ENCODE measurements at regions of chr5 and their contacts with region 1.

Region 1: DNA sequence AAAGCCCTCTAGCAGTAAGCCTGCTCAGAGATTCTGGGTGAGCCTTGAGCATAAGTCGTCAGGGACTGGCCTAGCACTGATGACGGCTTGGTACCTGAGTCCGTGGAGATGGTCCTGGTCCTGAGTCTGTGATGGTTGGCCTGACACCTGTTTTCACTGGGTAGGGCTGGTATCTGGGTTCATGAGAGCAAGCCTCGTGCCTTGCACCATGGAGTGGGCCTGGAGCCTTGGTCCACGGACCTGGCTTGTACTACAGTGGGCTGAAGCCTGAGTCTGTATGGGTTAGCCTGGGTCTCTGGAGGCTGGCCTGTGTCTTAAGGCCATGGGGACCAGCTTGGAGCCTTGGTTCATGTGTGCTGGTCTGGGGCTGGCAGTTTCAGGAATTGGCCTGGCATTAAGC is 310.3 kb upstream of the ISL1 start:
- DNase-seq: no peak

Region 2: GRCh38 chr5:50759526-50760270 is 313.2 kb before region 1 on chr5:
- intact Hi-C with region 1: no loop called
- DNase-seq: no peak

Region 3: GRCh38 chr5:51104556-51104955 is 31.6 kb after region 1 on chr5:
- intact Hi-C with region 1: no loop called
- DNase-seq: no peak

Region 4: DNA sequence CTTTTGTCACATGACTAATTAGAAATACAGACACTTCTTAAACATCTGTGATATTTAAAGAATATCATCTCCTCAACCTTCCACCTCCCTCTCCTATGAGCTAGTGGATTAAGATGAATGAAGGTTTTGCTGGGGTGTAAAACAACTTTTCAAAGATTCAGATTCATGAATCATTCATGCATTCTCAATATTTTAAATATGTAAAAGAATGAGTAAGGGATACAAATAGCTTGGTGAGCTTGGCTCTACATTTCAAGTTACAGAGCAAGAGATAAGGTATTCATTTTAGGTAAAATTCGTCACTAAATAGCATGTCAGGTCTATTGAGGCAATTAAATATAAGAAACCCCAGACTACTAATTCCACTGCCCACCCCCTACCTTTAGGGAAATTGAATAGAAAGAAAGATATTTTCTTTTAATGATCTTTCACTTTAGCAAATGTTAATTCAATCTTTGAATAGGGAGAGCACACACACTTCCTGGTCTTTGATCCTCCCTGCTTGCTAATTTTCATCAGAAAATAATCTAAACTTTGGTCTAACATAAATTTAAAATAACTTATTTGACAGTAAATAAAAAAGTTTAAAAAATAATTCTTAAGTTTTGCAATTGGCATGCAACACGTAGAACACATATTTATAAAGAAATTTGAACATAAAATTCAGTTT is 1227.9 kb after region 1 on chr5:
- intact Hi-C with region 1: loop called in 1 of 2 experiments (anchors 10 kb)
- DNase-seq: no peak

Measured in posterior vena cava (tissue), 2 donors.